ENCODE measurements at regions of chr5 and their contacts with region 1.

Region 1: GRCh38 chr5:75717082-75717922 is at the start of gene POC5:
- DNase-seq: peak; percentile 91 to 97 (median 94)
- H3K4me3 ChIP-seq: peak within 1 kb of the TSS; percentile 62 to 99 (median 87)
- H3K27ac ChIP-seq: peak within 1 kb of the TSS in 57 of 59 donors; percentile 10 to 93 (median 81)
- H3K27me3 ChIP-seq: no peaks in the 10 kb centered on the region
- CTCF ChIP-seq: peak in 33 of 56 donors; percentile 5 to 60 (median 29)
- total RNA-seq, gene POC5: 7.6 to 28.1 (median 15.2) TPM

Region 2: GRCh38 chr5:75668977-75669689 is 48.2 kb before region 1 on chr5:
- intact Hi-C with region 1: loop called in 1 of 2 experiments (anchors 10 kb)
- DNase-seq: peak in 1 of 10 donors; percentile 26
- H3K4me3 ChIP-seq: peak overlapping the region in 27 of 59 donors; percentile 1 to 42 (median 22)
- H3K27ac ChIP-seq: peak overlapping the region in 5 of 59 donors; percentile 8 to 55 (median 15)
- H3K27me3 ChIP-seq: no peaks in the 10 kb centered on the region
- CTCF ChIP-seq: no peak

Measured in dorsolateral prefrontal cortex (tissue), 120 donors.